ENCODE measurements at regions of chr1 and their contacts with region 1.

Region 1: GRCh38 chr1:156728597-156729462 is at the start of gene ISG20L2:
- DNase-seq: peak; percentile 96
- ATAC-seq: peak; percentile 90
- H3K4me3 Mint-ChIP-seq: no peak within 1 kb of the TSS
- H3K27ac Mint-ChIP-seq: peak within 1 kb of the TSS; percentile 99
- H3K4me1 Mint-ChIP-seq: peaks cover 14% of the 10 kb centered on the region
- H3K27me3 Mint-ChIP-seq: no peaks in the 10 kb centered on the region
- CTCF ChIP-seq: no peak
- total RNA-seq, gene ISG20L2: 37.2 to 43.8 TPM (median 42.2 TPM) in 3 replicates

Region 2: DNA sequence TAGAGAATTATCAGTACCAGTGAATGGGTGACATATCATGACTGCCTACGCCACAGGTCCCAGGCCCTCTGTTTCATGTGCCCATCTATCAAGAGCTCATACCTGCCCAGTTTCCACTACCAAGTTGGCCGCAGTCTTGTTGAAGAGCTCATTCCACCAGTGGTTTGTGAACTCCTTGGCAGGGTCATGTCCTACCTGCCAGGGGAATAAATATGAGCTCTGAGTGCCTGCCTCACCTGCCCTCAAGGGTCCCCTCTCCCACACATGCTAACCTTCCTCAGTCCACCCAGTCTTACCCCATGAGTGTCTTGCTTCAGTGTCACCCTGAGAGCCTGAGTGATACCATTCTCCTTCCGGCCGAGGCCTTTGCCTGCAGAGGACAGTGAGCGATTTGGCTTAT is 130.7 kb before region 1 on chr1:
- CTCF ChIA-PET with region 1: no interaction called
- POLR2A ChIA-PET with region 1: no interaction called
- DNase-seq: no peak
- ATAC-seq: no peak
- H3K4me3 Mint-ChIP-seq: no peak overlapping the region
- H3K27ac Mint-ChIP-seq: peak overlapping the region; percentile 11; the same call in 1 of the 2 replicates
- H3K4me1 Mint-ChIP-seq: peaks cover 13% of the 10 kb centered on the region
- H3K27me3 Mint-ChIP-seq: no peaks in the 10 kb centered on the region
- CTCF ChIP-seq: no peak

Region 3: GRCh38 chr1:156641761-156642264 is 87.0 kb before region 1 on chr1 and contains the start of gene BCAN:
- CTCF ChIA-PET with region 1: interaction called, 10 read pairs
- POLR2A ChIA-PET with region 1: no interaction called
- DNase-seq: peak; percentile 73
- ATAC-seq: peak; percentile 70
- H3K4me3 Mint-ChIP-seq: peak within 1 kb of the TSS; percentile 70
- H3K27ac Mint-ChIP-seq: no peak within 1 kb of the TSS
- H3K4me1 Mint-ChIP-seq: peaks cover 29% of the 10 kb centered on the region
- H3K27me3 Mint-ChIP-seq: peaks cover 92% of the 10 kb centered on the region
- CTCF ChIP-seq: no peak
- total RNA-seq, gene BCAN: 2.5 to 3.7 TPM (median 3.6 TPM) in 3 replicates

Region 4: GRCh38 chr1:156705918-156706656 is 22.7 kb before region 1 on chr1:
- CTCF ChIA-PET with region 1: interaction called, 360 read pairs
- POLR2A ChIA-PET with region 1: interaction called, 19 read pairs
- DNase-seq: peak; percentile 94
- ATAC-seq: peak; percentile 45
- H3K4me3 Mint-ChIP-seq: peak overlapping the region; percentile 84
- H3K27ac Mint-ChIP-seq: peak overlapping the region; percentile 96
- H3K4me1 Mint-ChIP-seq: peaks cover 62% of the 10 kb centered on the region
- H3K27me3 Mint-ChIP-seq: peaks cover 23% of the 10 kb centered on the region
- CTCF ChIP-seq: peak; percentile 96

Region 5: GRCh38 chr1:156767101-156767878 is 38.5 kb after region 1 on chr1 and contains the start of gene PRCC:
- CTCF ChIA-PET with region 1: interaction called, 39 read pairs
- POLR2A ChIA-PET with region 1: interaction called, 10 read pairs
- DNase-seq: peak; percentile 98
- ATAC-seq: peak; percentile 96
- H3K4me3 Mint-ChIP-seq: no peak within 1 kb of the TSS
- H3K27ac Mint-ChIP-seq: peak within 1 kb of the TSS; percentile 28; the same call in 1 of the 2 replicates
- H3K4me1 Mint-ChIP-seq: peaks cover 34% of the 10 kb centered on the region
- H3K27me3 Mint-ChIP-seq: no peaks in the 10 kb centered on the region
- CTCF ChIP-seq: no peak
- total RNA-seq, gene PRCC: 97.4 to 98.5 TPM (median 98.0 TPM) in 3 replicates

Region 6: DNA sequence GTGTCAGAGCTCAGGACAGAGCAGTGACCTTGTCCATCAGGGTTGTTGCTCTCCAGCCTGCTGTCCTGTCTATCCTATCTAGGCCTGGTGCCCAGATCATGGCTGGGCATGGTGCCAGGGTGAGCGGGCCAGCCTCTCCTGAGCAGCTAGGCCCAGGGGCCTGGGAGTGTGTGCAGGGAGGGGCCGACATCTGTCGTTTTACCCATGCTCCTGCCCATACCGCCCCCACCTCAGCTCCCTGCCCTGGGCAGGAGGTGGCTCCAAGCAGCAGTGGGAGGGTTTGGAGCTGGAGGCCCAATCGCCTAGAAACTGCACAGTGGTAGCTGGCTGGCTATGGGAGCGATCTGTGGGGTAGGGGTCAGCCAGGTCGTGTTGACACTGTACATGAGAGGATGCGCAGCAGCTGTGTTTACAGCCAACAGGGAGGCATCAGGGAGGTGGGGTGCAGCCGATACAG is 123.6 kb after region 1 on chr1:
- CTCF ChIA-PET with region 1: interaction called, 13 read pairs
- POLR2A ChIA-PET with region 1: no interaction called
- DNase-seq: no peak
- ATAC-seq: no peak
- H3K4me3 Mint-ChIP-seq: no peak overlapping the region
- H3K27ac Mint-ChIP-seq: no peak overlapping the region
- H3K4me1 Mint-ChIP-seq: peaks cover 10% of the 10 kb centered on the region
- H3K27me3 Mint-ChIP-seq: peaks cover 89% of the 10 kb centered on the region
- CTCF ChIP-seq: no peak

Region 7: GRCh38 chr1:156927215-156928042 is 198.6 kb after region 1 on chr1:
- CTCF ChIA-PET with region 1: interaction called, 24 read pairs
- POLR2A ChIA-PET with region 1: no interaction called
- DNase-seq: peak; percentile 92
- ATAC-seq: peak; percentile 83
- H3K4me3 Mint-ChIP-seq: peak overlapping the region; percentile 68
- H3K27ac Mint-ChIP-seq: no peak overlapping the region
- H3K4me1 Mint-ChIP-seq: peaks cover 21% of the 10 kb centered on the region
- H3K27me3 Mint-ChIP-seq: peaks cover 91% of the 10 kb centered on the region
- CTCF ChIP-seq: peak; percentile 52; the same call in 1 of the 2 replicates

Measured in WTC11 (cell line).